Naive thymus-derived CD4-positive, alpha-beta T cell (primary cell): ENCODE measurements at regions of chr10 and their contacts with region 1.

Region 1: GRCh38 chr10:92432596-92432995 is 141.3 kb downstream of the IDE start:
- DNase-seq: no peak
- ATAC-seq: no peak
- H3K4me3 ChIP-seq: no peak overlapping the region
- H3K4me3 Mint-ChIP-seq: no peak overlapping the region
- H3K27ac ChIP-seq: no peak overlapping the region
- H3K27ac Mint-ChIP-seq: no peak overlapping the region
- H3K4me1 ChIP-seq: no peaks in the 10 kb centered on the region
- H3K4me1 Mint-ChIP-seq: no peaks in the 10 kb centered on the region
- H3K27me3 ChIP-seq: no peaks in the 10 kb centered on the region
- H3K27me3 Mint-ChIP-seq: no peaks in the 10 kb centered on the region

Region 2: DNA sequence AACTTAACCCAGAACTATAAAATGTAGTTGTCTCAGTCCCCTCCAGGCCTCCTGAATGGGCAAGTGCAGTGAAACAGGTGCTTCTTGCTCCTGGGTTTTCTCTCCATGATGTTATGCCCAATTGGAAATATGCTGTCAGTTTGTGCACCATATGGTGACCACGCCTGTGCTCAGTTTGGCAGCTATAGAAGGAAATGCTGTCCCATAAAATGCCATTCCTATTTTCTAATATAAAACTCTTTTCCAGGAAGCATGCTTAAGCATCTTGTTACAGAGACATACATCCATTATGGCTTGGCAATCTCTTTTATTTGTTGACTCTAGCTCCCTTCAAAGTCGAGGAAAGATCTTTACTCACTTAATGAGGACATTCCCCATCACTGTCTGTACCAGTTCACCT is 568.5 kb before region 1 on chr10:
- CTCF ChIA-PET with region 1: no interaction called
- POLR2A ChIA-PET with region 1: no interaction called
- intact Hi-C with region 1: loop called in 1 of 2 experiments (anchors 10 kb)
- DNase-seq: no peak
- ATAC-seq: no peak
- H3K4me3 ChIP-seq: no peak overlapping the region
- H3K4me3 Mint-ChIP-seq: no peak overlapping the region
- H3K27ac ChIP-seq: no peak overlapping the region
- H3K27ac Mint-ChIP-seq: no peak overlapping the region
- H3K4me1 ChIP-seq: no peaks in the 10 kb centered on the region
- H3K4me1 Mint-ChIP-seq: no peaks in the 10 kb centered on the region
- H3K27me3 ChIP-seq: no peaks in the 10 kb centered on the region
- H3K27me3 Mint-ChIP-seq: no peaks in the 10 kb centered on the region

Region 3: DNA sequence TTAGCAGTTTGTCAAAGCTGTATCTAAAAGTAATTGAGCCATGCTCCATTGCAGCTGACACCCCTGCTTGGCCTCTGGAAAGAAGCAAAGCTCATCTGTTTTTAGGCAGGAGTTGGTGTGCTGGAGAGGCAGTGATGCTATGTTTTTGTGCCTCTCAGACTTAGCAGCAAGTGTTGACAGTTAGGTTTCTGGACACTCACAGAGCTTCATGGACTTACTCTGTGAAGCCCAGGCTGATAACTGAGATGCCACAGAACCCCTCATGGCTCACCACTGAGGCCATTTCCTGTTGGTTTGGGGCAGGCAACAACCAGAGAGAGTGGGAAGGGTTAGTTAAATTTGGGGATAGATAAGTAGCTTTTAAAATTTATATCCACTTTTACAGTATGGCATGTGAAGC is 449.2 kb before region 1 on chr10:
- CTCF ChIA-PET with region 1: no interaction called
- POLR2A ChIA-PET with region 1: no interaction called
- intact Hi-C with region 1: loop called in 1 of 2 experiments (anchors 10 kb)
- DNase-seq: no peak
- ATAC-seq: no peak
- H3K4me3 ChIP-seq: no peak overlapping the region
- H3K4me3 Mint-ChIP-seq: no peak overlapping the region
- H3K27ac ChIP-seq: no peak overlapping the region
- H3K27ac Mint-ChIP-seq: peak overlapping the region in 2 of 9 donors; percentile 50 to 74
- H3K4me1 ChIP-seq: no peaks in the 10 kb centered on the region
- H3K4me1 Mint-ChIP-seq: peaks cover 0 to 23% (median 8%) of the 10 kb centered on the region in 7 donors
- H3K27me3 ChIP-seq: no peaks in the 10 kb centered on the region
- H3K27me3 Mint-ChIP-seq: no peaks in the 10 kb centered on the region